Vagina (tissue), 2 donors: ENCODE measurements at regions of chr4 and their contacts with region 1.

Region 1: DNA sequence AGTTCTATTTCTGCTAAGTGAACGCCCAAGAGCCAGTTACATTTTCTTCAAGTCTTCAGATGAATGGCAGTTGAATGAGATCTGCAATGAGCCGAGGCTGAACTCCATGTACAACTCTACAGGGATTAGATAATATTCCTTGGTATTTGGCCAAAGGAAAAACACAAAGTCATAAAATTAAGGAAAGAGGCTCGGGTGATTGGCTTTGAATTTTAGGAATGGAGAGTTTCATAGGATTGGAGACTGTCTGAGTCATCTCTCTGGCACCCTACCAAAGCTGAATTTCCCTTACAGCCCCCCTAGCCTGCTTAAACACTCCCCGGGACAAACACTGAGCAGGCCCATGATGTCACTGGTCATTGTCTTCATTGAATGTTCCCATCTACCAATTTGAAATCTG is 188.0 kb upstream of the C1QTNF7 start:
- DNase-seq: peak in 1 of 2 donors; percentile 86
- H3K4me3 ChIP-seq: no peak overlapping the region
- H3K27ac ChIP-seq: no peak overlapping the region
- H3K4me1 ChIP-seq: peaks cover 33% of the 10 kb centered on the region
- H3K27me3 ChIP-seq: no peaks in the 10 kb centered on the region
- CTCF ChIP-seq: no peak
- POLR2A ChIP-seq: no peak

Region 2: DNA sequence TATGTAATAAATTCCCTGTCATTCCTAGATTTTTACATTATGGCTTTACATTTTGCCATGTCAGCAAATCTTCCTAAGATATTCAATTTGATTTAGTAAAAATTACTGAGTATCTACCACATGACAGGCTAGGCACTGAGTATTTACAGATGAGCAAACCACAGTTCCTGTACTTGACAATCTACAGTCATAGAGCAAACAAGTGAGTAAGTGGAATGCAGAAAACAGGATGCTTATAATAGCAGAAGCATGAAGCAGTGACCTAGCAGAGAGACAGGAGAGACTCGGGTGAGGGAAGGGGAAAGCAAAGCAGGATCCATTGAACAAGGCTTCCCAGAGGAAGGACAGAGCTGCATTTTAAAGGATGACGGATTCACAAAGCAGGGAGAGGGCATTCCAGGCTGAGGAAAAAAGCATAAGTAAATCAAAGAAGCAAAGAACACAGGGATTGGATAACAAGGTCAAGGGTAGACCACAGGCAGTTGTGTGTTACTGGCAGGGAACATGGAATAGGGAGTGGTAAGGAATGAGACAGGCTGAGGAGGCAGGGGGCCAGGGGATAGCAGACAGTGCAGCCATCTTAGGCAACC is 63.3 kb after region 1 on chr4:
- intact Hi-C with region 1: loop called (anchors 10 kb)
- DNase-seq: no peak
- H3K4me3 ChIP-seq: no peak overlapping the region
- H3K27ac ChIP-seq: peak overlapping the region; percentile 30
- H3K4me1 ChIP-seq: peaks cover 4% of the 10 kb centered on the region
- H3K27me3 ChIP-seq: no peaks in the 10 kb centered on the region
- CTCF ChIP-seq: no peak
- POLR2A ChIP-seq: no peak

Region 3: DNA sequence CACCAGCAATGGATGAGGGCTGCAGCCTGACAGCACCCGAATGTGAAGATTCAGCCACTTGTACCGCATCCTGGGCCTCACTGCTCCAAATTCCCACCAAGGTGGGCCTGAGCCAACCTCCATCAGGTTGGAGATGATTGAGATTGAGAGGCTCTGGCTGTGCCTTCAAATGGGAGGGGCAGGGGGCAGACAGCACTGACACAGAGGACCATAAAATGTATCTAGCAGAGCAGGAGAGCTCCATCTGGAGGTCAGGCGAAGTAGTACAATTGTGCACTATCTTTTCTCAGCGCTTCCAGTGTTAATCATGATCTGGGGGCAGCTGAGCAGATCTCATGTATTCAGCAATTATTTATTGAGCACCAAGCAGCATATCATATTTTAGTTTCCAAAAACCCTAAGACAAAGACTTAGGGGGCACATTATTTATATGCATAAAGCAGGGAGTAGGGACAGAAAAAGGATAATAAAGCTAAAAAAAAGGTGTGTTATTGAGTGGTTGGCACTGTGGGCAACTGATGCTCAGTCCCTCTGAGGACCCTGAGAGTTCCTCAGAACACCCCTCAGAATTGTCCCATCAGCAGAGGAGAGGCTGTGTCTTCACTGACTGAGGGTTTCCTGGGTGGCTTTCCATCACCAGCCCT is 156.4 kb after region 1 on chr4:
- intact Hi-C with region 1: no loop called
- DNase-seq: no peak
- H3K4me3 ChIP-seq: no peak overlapping the region
- H3K27ac ChIP-seq: peak overlapping the region; percentile 40
- H3K4me1 ChIP-seq: peaks cover 44% of the 10 kb centered on the region
- H3K27me3 ChIP-seq: no peaks in the 10 kb centered on the region
- CTCF ChIP-seq: peak in 2 of 3 experiments; percentile 8 to 46
- POLR2A ChIP-seq: no peak